ENCODE measurements at regions of chr17 and their contacts with region 1.

Region 1: DNA sequence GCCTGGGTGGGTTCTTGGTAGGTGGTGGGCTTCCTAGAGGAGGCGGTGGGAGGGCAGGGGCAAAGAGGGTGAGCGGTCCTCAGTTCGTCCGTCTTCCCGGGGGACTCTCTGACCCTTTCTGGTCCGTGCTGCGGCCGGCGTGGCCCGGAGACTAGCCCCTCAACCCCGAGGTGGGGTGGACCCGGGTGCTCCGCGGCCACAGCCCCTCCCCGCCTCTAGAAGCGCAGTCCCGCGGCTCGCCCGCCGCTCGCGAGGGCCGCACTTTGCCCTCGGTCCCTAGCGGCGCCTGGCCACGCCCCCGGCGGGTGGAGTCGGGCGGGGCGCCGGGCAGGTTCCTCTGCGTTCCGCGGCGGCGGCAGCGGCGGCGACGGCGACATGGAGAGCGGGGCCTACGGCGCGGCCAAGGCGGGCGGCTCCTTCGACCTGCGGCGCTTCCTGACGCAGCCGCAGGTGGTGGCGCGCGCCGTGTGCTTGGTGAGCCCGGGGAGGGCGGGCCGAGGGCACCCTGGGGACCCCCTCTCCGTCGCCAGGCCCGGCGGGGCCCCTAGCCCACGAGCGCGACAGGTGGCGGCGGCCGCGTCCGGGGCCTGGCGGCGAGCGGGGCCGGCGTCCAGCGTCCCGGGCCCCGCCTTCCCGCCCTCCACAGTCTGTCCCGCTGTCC is at the start of gene SYNGR2:
- DNase-seq: peak; percentile 74
- H3K4me3 ChIP-seq: peak within 1 kb of the TSS; percentile 59 to 75 (median 62)
- H3K27ac ChIP-seq: no peak within 1 kb of the TSS
- H3K4me1 ChIP-seq: peaks cover 5% of the 10 kb centered on the region
- H3K27me3 ChIP-seq: no peaks in the 10 kb centered on the region
- CTCF ChIP-seq: no peak
- total RNA-seq, gene SYNGR2: 39.0 to 72.6 TPM

Region 2: DNA sequence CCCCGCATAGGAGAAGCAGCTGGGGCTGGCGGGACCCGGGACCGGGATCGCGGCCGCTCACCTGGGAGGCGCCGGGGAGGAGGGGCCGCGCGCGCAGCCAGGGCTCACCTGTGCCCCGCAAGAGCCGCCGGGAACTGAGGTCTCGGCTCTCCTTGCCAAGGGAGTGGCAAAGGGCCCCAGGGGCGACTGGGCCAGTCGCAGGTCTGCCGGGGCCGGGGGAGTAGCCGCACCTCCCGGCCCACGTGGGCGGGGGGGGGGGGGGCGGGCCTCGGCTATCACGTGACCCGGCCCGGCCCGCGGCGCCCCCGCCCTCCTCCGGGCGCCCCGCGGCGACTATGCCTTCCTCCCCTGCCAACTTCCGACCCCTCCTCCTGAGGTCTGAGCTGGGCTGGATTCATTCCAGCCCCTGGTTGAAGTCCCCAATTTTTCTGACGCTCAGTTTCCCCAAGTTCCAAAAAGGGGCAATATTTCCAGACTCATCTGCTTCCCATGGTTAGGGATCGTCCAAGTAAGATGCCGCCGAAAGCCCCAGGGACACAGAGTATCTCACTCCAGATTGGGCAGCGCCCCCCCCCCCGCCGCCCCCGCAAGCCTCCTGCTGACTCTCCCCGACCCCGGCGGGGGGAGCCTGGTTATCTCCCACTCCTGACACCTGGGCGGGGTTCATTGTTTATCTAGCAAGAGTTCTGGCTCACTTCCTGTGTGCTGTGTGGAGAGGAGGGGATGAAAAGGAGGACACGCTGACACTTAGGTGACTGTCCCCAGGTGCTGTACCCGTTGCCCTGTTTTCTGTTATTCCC is 39.6 kb before region 1 on chr17 and contains the start of gene TMC6:
- CTCF ChIA-PET with region 1: no interaction called
- dilution Hi-C with region 1: no loop called
- in situ Hi-C with region 1: no loop called
- intact Hi-C with region 1: loop called (anchors 1 kb)
- DNase-seq: peak; percentile 46
- H3K4me3 ChIP-seq: peak within 1 kb of the TSS; percentile 64 to 95 (median 85)
- H3K27ac ChIP-seq: no peak within 1 kb of the TSS
- H3K4me1 ChIP-seq: peaks cover 19% of the 10 kb centered on the region
- H3K27me3 ChIP-seq: no peaks in the 10 kb centered on the region
- CTCF ChIP-seq: no peak
- total RNA-seq, gene TMC6: 41.4 to 46.3 TPM

Region 3: DNA sequence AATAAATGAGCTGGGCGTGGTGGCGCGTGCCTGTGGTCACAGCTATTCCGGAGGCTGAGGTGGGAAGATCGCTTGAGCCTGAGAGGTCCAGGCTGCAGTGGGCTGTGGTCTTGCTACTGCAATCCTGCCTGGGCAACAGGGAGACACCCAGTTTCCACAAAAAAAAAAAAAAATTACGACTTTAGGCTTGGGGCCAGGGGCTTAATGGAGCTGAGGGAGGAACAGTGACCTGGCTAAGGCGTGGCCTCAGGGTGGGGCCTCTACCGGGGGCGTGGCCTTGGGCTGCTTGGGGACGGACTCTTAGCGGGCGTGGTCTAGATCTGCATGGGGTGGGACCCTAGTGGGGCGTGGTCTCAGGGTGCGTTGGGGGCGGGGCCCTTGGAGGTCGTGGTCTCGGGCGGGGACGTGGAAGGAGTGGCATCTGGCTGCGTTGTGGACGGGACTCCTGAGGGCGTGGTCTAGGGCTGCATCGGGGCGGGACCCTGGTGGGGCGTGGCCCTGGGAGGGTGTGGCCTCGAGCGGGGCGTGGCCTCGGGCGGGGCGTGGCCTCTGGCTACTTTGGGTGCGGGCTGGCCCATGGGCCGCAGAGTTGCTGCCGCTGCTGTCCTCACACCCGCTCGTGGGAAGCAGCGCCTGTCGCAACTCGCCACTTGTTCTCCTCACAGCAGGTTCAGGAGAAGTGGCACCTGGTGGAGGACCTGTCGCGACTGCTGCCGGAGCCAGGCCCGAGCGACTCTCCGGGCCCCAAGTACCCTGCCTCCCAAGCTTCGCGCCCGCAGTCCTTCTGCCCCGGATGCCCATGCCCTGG is 28.0 kb before region 1 on chr17:
- CTCF ChIA-PET with region 1: no interaction called
- dilution Hi-C with region 1: no loop called
- in situ Hi-C with region 1: no loop called
- intact Hi-C with region 1: loop called (anchors 2 kb)
- DNase-seq: peak; percentile 81
- H3K4me3 ChIP-seq: peak overlapping the region in 1 of 3 experiments; percentile 9
- H3K27ac ChIP-seq: no peak overlapping the region
- H3K4me1 ChIP-seq: peaks cover 32% of the 10 kb centered on the region
- H3K27me3 ChIP-seq: no peaks in the 10 kb centered on the region
- CTCF ChIP-seq: no peak

Region 4: DNA sequence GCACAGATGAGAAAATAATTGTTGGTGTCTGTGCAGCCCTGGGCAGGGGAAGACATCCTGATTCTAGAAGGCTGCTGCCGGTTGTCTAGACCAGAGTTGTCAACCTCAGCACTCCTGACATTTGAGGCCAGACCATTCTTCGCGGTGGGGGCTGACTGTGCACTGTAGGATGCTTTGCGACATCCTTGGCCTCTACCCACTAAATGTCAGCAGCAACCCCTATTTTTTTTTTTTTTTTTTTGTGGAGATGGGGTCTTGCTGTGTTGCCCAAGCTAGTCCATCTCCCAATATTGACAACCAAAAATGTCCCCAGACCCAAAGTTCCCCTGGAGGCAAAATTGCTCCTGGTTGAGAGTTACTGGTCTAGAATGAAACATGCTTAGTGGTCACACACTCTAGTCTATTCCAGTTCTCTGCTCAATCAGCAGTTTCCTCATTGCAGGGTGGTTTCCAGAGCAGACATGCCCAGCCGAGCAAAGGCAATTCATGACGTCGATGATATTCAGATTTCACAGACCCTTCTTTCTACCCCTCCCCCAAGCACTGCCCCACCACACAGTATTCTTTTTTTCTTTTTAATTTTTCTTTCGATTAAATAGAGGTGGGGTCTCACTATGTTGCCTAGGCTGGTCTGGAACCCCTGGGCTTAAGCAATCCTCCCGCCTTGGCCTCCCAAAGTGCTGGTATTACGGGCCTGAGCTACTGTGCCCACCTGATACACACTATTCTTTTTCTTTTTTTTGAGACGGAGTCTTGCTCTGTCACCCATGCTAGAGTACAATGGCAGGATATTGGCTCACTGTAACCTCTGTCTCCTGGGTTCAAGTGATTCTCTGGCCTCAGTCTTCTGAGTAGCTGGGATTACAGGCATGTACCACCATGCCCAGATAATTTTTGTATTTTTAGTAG is 13.2 kb before region 1 on chr17:
- CTCF ChIA-PET with region 1: no interaction called
- dilution Hi-C with region 1: no loop called
- in situ Hi-C with region 1: no loop called
- intact Hi-C with region 1: loop called (anchors 1 kb)
- DNase-seq: peak; percentile 78
- H3K4me3 ChIP-seq: no peak overlapping the region
- H3K27ac ChIP-seq: no peak overlapping the region
- H3K4me1 ChIP-seq: peaks cover 12% of the 10 kb centered on the region
- H3K27me3 ChIP-seq: no peaks in the 10 kb centered on the region
- CTCF ChIP-seq: no peak

Region 5: GRCh38 chr17:78186692-78187595 is 18.6 kb after region 1 on chr17 and contains the starts of genes AFMID and TK1:
- CTCF ChIA-PET with region 1: no interaction called
- dilution Hi-C with region 1: no loop called
- in situ Hi-C with region 1: no loop called
- intact Hi-C with region 1: loop called (anchors 2 kb)
- DNase-seq: peak; percentile 97
- H3K4me3 ChIP-seq: peak within 1 kb of the TSS; percentile 66 to 75 (median 71)
- H3K27ac ChIP-seq: peak within 1 kb of the TSS; percentile 57
- H3K4me1 ChIP-seq: peaks cover 13% of the 10 kb centered on the region
- H3K27me3 ChIP-seq: no peaks in the 10 kb centered on the region
- CTCF ChIP-seq: peak; percentile 43 to 86
- total RNA-seq, gene AFMID: 16.5 to 32.5 TPM
- total RNA-seq, gene TK1: 7.7 to 79.5 TPM

Region 6: DNA sequence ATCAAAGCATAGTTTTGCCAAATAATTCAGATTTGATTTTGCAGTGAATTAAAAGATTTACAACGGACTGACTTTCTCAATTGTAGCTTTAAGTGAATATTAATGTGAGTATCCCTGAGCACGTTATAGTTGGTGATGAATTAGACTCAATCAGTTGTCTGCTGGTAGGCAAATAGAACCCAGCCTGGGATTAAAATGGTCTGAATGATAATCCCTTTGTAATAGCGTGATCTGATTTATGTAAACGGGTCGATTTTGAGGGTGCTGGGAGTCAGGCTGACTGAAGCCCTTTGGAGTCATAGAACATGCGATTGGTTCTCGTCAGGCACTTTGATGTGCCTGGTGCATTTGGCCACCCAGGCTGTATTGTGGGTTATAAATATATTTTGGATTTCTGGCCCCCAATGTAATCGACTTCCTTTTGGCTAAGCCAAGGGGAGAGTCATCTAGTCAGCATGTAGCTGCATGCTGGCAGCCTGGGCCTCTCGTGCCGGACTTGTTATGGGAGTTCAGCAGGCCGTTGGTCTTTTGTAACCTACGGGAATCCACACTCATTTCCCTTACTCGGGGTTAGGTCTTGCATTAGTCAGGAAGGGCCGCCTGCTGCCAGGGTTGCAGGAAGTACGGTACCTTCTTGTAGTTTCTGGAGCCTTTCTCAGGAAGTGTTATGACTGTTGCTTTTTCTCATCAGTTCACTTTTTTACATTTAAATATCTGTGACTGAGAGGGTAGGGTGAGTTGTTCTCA is 215.5 kb after region 1 on chr17:
- CTCF ChIA-PET with region 1: no interaction called
- dilution Hi-C with region 1: no loop called
- in situ Hi-C with region 1: no loop called
- intact Hi-C with region 1: loop called (anchors 5 kb)
- DNase-seq: peak; percentile 97
- H3K4me3 ChIP-seq: no peak overlapping the region
- H3K27ac ChIP-seq: peak overlapping the region; percentile 51
- H3K4me1 ChIP-seq: peaks cover 31% of the 10 kb centered on the region
- H3K27me3 ChIP-seq: no peaks in the 10 kb centered on the region
- CTCF ChIP-seq: no peak